SK-N-SH (cell line): ENCODE measurements at regions of chr7 and their contacts with region 1.

Region 1: GRCh38 chr7:7681179-7681935 is 37.0 kb downstream of the RPA3 start:
- DNase-seq: peak; percentile 48
- H3K4me3 ChIP-seq: no peak overlapping the region
- H3K27ac ChIP-seq: peak overlapping the region in 1 of 2 experiments; percentile 90; a peak in 2 of 4 replicates
- H3K4me1 ChIP-seq: peaks cover 0 to 12% of the 10 kb centered on the region in 2 experiments; a peak in 2 of 4 replicates
- H3K27me3 ChIP-seq: no peaks in the 10 kb centered on the region
- CTCF ChIP-seq: peak; percentile 93
- EP300 ChIP-seq: no peak
- RAD21 ChIP-seq: peak; percentile 93

Region 2: DNA sequence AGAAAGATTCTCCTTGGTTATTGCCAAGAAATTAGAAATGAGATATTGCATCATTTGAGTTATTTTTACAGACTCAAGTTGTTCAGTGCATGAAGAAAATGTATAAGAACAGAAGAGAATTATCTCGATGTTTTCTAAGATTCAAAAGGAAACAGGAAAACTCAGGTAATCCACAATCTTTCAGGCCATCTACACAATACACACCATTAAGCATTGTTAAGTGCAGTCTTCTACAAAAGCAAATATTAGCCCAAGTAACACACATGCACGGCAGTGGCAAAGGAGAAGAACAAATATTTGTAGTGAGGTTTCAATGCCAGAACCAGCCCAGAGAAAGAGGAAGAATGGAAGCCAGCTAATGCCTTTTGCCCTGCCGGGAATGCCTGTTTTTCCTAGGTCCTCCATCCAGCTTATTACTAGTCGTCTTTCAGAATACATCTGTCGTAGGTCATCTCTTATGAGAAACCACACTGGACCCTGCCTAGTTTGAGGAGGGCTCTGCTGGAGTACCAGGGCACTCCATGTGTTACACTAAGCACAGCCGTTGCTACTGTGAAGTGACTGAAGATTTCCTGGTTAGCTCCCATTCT is 566.6 kb before region 1 on chr7:
- CTCF ChIA-PET with region 1: no interaction called
- POLR2A ChIA-PET with region 1: no interaction called
- DNase-seq: no peak
- H3K4me3 ChIP-seq: no peak overlapping the region
- H3K27ac ChIP-seq: no peak overlapping the region
- H3K4me1 ChIP-seq: no peaks in the 10 kb centered on the region
- H3K27me3 ChIP-seq: no peaks in the 10 kb centered on the region
- CTCF ChIP-seq: no peak
- EP300 ChIP-seq: no peak
- RAD21 ChIP-seq: no peak

Region 3: DNA sequence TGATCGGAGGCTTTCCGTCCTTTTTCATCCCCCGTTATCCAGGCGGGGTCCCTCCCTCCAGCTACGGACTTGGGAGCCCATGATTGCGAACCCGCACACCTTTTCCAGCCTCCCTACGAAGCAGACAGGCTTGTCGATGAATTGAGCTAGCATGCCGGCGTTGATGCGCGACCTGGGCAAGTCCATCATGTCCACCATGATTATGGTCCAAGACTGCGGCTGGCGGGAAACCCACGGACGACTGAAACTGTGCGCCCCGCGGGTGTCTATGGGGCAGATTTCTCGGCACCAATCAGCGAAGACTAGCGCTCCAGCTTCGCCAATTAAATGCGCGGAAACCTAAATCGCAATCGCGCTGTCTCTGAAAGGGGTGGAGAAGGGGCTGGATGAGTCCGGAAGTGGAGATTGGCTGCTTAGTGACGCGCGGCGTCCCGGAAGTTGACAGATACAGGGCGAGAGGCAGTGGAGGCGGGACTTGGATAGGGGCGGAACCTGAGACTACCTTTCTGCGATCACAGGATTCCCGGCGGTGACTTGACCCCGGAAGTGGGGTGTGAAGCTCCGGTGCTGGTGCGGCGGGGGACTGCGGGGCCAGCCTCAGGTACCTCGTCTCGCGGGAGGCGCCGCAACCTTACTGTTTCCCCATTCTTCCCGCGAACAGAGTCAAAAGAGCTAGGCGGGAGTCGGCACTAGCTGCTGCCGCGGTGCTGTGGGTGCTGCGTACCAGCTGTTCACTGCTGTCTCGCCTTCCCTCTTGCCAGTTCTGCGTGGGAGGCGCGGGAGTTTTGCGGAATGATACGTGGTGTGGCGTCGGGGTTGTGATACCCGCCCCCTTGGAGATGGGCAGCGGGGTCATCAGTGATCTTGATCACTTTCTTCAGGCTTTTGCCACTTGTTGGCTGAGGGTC is 40.9 kb before region 1 on chr7 and contains the start of gene UMAD1:
- CTCF ChIA-PET with region 1: interaction called, 23 read pairs
- POLR2A ChIA-PET with region 1: interaction called, 6 read pairs
- DNase-seq: peak; percentile 93
- H3K4me3 ChIP-seq: peak within 1 kb of the TSS; percentile 79 to 85
- H3K27ac ChIP-seq: peak within 1 kb of the TSS; percentile 80 to 96
- H3K4me1 ChIP-seq: peaks cover 0 to 21% of the 10 kb centered on the region in 2 experiments; a peak in 2 of 4 replicates
- H3K27me3 ChIP-seq: no peaks in the 10 kb centered on the region
- CTCF ChIP-seq: no peak
- EP300 ChIP-seq: peak in 1 of 2 experiments; percentile 3; a peak in 1 of 4 replicates
- RAD21 ChIP-seq: no peak
- polyA plus RNA-seq, gene UMAD1: 13.9 and 17.6 TPM in 2 replicates

Region 4: GRCh38 chr7:7702826-7703225 is 21.5 kb after region 1 on chr7:
- CTCF ChIA-PET with region 1: interaction called, 24 read pairs
- POLR2A ChIA-PET with region 1: no interaction called
- DNase-seq: no peak
- H3K4me3 ChIP-seq: no peak overlapping the region
- H3K27ac ChIP-seq: peak overlapping the region in 1 of 2 experiments; percentile 29; a peak in 1 of 4 replicates
- H3K4me1 ChIP-seq: peaks cover 13 to 27% of the 10 kb centered on the region in 2 experiments; a peak in 3 of 4 replicates
- H3K27me3 ChIP-seq: no peaks in the 10 kb centered on the region
- CTCF ChIP-seq: no peak
- EP300 ChIP-seq: peak in 1 of 2 experiments; percentile 10; a peak in 1 of 4 replicates
- RAD21 ChIP-seq: no peak

Region 5: DNA sequence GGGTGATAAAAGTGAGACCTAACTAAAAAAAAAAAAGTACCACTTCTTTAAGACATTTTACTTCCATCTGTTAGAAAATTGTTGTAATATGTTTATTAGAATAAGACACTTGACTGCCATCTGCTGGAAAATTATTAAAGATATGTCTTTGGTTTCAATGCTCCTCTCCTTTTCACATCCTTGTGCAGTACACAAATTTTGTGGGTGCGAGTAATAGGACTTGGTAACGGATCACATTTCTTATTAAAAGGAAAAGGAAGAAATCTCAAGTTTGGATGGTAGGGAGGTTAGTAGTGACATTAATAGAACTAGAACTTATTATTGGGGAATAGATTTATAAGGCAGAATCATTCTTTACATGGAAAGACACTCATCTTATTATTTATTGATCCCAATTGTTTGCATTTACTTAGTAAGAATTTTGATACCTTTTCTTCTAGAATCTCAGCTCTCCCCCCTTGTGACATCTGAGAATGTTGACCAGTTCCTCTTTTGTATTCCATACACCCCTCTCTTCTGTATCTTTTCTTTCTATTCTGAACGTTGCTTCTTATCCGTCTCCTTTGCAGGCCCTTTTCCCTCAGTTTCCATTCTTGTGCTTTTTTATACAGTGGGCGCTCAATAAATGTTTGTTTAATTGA is 80.1 kb after region 1 on chr7:
- CTCF ChIA-PET with region 1: interaction called, 37 read pairs
- POLR2A ChIA-PET with region 1: no interaction called
- DNase-seq: no peak
- H3K4me3 ChIP-seq: 0 out of 4 replicates have a peak overlapping the region, but pooled peaks of 1 of the 2 experiments have one; percentile 49
- H3K27ac ChIP-seq: no peak overlapping the region
- H3K4me1 ChIP-seq: peaks cover 6 to 8% of the 10 kb centered on the region in 2 experiments; a peak in 2 of 4 replicates
- H3K27me3 ChIP-seq: no peaks in the 10 kb centered on the region
- CTCF ChIP-seq: peak; percentile 69
- EP300 ChIP-seq: no peak
- RAD21 ChIP-seq: peak; percentile 65

Region 6: GRCh38 chr7:8190119-8190895 is 508.9 kb after region 1 on chr7:
- CTCF ChIA-PET with region 1: interaction called, 10 read pairs
- POLR2A ChIA-PET with region 1: no interaction called
- DNase-seq: peak; percentile 60
- H3K4me3 ChIP-seq: no peak overlapping the region
- H3K27ac ChIP-seq: peak overlapping the region in 1 of 2 experiments; percentile 60; a peak in 2 of 4 replicates
- H3K4me1 ChIP-seq: peaks cover 0 to 31% of the 10 kb centered on the region in 2 experiments; a peak in 2 of 4 replicates
- H3K27me3 ChIP-seq: no peaks in the 10 kb centered on the region
- CTCF ChIP-seq: peak; percentile 89
- EP300 ChIP-seq: 0 out of 4 replicates have a peak, but pooled peaks of 1 of the 2 experiments have one; percentile 10
- RAD21 ChIP-seq: peak; percentile 82